AG04449 (cell line): ENCODE measurements at regions of chr19 and their contacts with region 1.

Region 1: DNA sequence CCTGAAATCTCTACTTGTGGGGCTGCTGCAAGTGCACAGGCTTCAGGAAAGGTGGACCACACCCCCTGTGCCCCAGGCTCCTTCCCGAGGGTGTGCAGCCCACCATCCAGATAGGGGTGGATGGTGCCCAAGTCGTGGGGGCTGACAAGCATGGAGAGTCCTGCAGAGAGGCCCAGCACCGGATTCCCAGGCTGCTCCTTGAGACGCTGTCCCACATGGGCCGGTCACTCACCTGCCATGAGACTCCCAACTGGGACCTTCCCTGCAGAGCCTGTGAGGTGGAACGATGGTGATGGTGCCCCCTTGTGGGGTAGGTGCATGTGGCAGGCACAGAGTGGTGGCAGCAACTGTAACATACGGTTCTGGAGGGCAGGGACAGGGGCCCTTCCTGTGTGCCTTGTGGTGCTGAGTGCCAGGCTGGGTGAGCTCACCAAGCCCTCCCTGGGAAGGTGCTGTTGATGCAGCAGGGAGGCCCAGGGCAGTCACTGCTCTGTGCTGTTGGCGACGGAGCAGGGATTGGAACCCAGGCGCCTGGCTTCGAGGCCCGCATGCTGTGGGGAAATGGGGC is 33.0 kb downstream of the PPP1R37 start:
- DNase-seq: no peak
- H3K4me3 ChIP-seq: no peak overlapping the region
- CTCF ChIP-seq: peak; percentile 91

Region 2: DNA sequence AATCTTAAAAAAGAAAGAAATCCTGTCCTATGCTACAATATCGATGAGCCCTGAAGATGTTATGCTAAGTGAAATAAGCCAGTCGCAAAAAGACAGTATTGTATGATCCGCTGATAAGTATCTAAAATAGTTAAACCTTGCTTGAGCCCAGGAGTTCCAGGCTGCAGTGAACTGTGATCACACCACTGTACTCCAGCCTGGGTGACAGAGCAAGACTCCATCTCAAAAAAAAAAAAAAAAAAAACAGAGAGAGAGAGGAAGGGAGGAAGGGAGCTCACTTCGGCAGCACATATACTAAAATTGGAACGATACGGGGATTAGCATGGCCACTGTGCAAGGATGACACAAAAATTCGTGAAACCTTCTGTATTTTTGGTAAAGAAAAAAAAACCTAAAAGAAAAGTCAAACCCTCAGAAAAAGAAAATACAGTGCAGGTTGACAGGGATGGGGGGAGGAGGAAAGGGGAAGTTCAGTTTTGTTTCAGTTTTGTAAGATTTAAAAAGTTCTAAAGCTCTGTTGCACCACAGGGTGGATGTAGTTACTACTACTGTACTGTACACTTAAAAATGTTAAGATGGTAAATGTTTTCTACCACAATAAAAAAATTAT is 78.7 kb before region 1 on chr19:
- CTCF ChIA-PET with region 1: no interaction called
- POLR2A ChIA-PET with region 1: no interaction called
- DNase-seq: no peak
- H3K4me3 ChIP-seq: no peak overlapping the region
- CTCF ChIP-seq: no peak

Region 3: GRCh38 chr19:45059278-45059965 is 66.6 kb before region 1 on chr19:
- CTCF ChIA-PET with region 1: no interaction called
- POLR2A ChIA-PET with region 1: no interaction called
- DNase-seq: no peak
- H3K4me3 ChIP-seq: no peak overlapping the region
- CTCF ChIP-seq: peak; percentile 74

Region 4: GRCh38 chr19:45103156-45103507 is 22.9 kb before region 1 on chr19:
- CTCF ChIA-PET with region 1: interaction called, 29 read pairs
- POLR2A ChIA-PET with region 1: no interaction called
- DNase-seq: no peak
- H3K4me3 ChIP-seq: peak overlapping the region; percentile 15
- CTCF ChIP-seq: no peak

Region 5: DNA sequence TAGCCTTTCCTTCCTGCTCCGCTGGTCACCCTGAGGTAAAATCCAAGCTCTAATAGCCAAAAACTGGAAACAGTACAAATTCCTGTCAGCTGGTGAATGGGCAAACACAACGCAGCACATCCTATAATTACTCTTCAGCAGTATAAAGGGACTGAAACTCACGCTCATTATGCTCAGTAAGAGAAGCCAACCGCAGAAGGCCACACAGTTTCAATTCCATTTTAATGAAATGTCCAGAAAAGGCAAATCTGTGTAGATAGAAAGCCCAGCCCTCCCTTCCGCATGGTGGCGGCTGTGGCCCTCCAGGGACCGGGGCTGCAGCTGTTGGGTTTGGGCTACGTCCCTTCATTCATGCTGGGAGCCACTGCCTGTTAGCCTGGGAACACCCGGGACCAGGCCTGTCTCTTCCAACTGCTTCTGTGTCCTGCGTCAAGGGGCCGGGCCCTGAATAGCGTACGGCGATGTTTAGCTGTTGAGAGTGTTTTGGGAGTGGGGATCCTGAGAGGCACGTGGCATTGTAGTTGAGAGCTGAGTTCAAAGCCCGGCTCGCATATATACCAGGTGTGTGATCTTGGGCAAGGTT is 11.3 kb after region 1 on chr19:
- CTCF ChIA-PET with region 1: interaction called, 50 read pairs
- POLR2A ChIA-PET with region 1: no interaction called
- DNase-seq: no peak
- H3K4me3 ChIP-seq: no peak overlapping the region
- CTCF ChIP-seq: no peak

Region 6: GRCh38 chr19:45152504-45153338 is 26.7 kb after region 1 on chr19:
- CTCF ChIA-PET with region 1: interaction called, 17 read pairs
- POLR2A ChIA-PET with region 1: no interaction called
- DNase-seq: no peak
- H3K4me3 ChIP-seq: peak overlapping the region; percentile 41
- CTCF ChIP-seq: no peak